Mammary epithelial cell (primary cell): ENCODE measurements at regions of chrX and their contacts with region 1.

Region 1: DNA sequence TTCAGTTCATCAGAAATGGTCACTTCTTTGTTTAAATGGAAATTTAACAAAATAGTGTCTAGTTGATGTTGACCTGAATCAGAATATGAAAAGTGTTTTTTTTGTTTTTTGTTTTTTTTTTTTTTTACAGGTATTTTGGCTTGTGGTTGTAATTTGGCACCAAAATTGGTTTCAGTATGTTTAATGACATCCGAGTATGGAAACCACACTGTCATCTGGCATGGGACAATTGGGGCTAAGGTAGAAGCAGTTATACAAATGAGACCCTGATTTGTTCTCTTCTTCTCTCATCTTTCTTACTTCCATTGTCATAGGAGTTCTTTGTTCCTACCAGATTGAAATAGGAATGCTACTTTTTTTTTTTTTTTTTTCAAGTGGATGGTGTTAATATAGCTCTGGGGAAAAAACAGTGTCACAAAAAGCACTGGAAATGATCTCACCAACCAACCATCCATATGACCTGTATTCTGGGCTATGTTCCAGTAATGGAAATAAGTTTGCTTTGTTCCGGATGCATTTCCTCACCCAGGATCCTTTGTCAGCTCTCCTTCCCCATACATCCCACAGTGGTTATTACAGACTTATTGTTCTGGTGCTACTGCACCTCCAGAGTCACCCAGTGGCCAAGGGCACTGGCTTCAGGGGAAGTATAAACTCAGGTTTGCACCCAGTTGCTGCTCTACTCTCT is 95.8 kb downstream of the ATXN3L start:
- DNase-seq: peak; percentile 96
- H3K4me3 ChIP-seq: no peak overlapping the region
- H3K27ac ChIP-seq: peak overlapping the region; percentile 44
- H3K4me1 ChIP-seq: peaks cover 34% of the 10 kb centered on the region
- H3K27me3 ChIP-seq: no peaks in the 10 kb centered on the region
- CTCF ChIP-seq: peak; percentile 22 to 35

Region 2: DNA sequence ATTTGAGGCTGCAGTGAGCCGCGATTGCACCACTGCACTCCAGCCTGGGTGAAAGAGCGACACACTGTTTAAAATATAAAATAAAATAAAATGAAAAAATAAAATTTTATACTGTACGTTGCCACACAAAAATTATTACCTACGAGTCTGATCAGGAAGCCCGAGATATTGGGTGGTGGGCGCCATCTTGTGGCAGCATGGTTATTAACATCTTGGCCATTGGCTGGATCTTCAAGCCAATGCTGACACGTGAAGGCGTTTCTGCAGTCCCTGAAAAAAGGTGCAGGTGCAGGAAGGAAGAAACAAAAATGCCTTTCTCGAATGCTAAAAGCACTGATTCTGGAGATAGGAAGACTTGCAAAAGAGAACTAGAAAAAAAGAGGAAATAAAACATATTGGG is 322.5 kb before region 1 on chrX:
- CTCF ChIA-PET with region 1: interaction called, 15 read pairs
- dilution Hi-C with region 1: no loop called
- in situ Hi-C with region 1: no loop called
- intact Hi-C with region 1: no loop called
- DNase-seq: peak; percentile 48
- H3K4me3 ChIP-seq: no peak overlapping the region
- H3K27ac ChIP-seq: no peak overlapping the region
- H3K4me1 ChIP-seq: no peaks in the 10 kb centered on the region
- H3K27me3 ChIP-seq: no peaks in the 10 kb centered on the region
- CTCF ChIP-seq: peak; percentile 79

Region 3: GRCh38 chrX:12984629-12985319 is 239.2 kb before region 1 on chrX:
- CTCF ChIA-PET with region 1: no interaction called
- dilution Hi-C with region 1: no loop called
- in situ Hi-C with region 1: no loop called
- intact Hi-C with region 1: loop called (anchors 1 kb)
- DNase-seq: peak; percentile 97
- H3K4me3 ChIP-seq: no peak overlapping the region
- H3K27ac ChIP-seq: peak overlapping the region; percentile 82
- H3K4me1 ChIP-seq: peaks cover 34% of the 10 kb centered on the region
- H3K27me3 ChIP-seq: no peaks in the 10 kb centered on the region
- CTCF ChIP-seq: no peak

Region 4: GRCh38 chrX:13101441-13102139 is 122.4 kb before region 1 on chrX:
- CTCF ChIA-PET with region 1: no interaction called
- dilution Hi-C with region 1: no loop called
- in situ Hi-C with region 1: no loop called
- intact Hi-C with region 1: loop called (anchors 2 kb)
- DNase-seq: peak; percentile 97
- H3K4me3 ChIP-seq: no peak overlapping the region
- H3K27ac ChIP-seq: peak overlapping the region; percentile 68
- H3K4me1 ChIP-seq: peaks cover 26% of the 10 kb centered on the region
- H3K27me3 ChIP-seq: no peaks in the 10 kb centered on the region
- CTCF ChIP-seq: no peak

Region 5: DNA sequence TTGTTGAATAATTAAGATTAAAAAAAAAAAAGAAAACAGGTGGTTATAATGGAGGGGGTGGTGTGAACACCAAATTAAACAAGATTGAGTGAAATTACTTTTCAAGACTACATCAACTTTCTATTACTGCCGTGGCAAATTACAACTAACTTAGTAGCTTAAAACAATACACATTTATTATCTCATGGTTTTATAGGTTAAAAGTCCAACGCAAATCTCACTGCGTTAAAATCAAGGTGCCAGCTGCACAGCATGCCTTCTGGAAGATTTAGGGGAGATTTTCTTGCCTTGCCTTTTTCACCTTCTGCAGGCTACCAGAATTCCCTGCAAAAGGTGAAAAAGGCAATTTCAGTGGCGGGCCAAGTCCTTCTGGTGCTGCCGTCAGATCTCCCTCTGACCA is 37.3 kb after region 1 on chrX:
- CTCF ChIA-PET with region 1: no interaction called
- dilution Hi-C with region 1: no loop called
- in situ Hi-C with region 1: no loop called
- intact Hi-C with region 1: no loop called
- DNase-seq: no peak
- H3K4me3 ChIP-seq: no peak overlapping the region
- H3K27ac ChIP-seq: no peak overlapping the region
- H3K4me1 ChIP-seq: peaks cover 1% of the 10 kb centered on the region
- H3K27me3 ChIP-seq: no peaks in the 10 kb centered on the region
- CTCF ChIP-seq: no peak

Region 6: DNA sequence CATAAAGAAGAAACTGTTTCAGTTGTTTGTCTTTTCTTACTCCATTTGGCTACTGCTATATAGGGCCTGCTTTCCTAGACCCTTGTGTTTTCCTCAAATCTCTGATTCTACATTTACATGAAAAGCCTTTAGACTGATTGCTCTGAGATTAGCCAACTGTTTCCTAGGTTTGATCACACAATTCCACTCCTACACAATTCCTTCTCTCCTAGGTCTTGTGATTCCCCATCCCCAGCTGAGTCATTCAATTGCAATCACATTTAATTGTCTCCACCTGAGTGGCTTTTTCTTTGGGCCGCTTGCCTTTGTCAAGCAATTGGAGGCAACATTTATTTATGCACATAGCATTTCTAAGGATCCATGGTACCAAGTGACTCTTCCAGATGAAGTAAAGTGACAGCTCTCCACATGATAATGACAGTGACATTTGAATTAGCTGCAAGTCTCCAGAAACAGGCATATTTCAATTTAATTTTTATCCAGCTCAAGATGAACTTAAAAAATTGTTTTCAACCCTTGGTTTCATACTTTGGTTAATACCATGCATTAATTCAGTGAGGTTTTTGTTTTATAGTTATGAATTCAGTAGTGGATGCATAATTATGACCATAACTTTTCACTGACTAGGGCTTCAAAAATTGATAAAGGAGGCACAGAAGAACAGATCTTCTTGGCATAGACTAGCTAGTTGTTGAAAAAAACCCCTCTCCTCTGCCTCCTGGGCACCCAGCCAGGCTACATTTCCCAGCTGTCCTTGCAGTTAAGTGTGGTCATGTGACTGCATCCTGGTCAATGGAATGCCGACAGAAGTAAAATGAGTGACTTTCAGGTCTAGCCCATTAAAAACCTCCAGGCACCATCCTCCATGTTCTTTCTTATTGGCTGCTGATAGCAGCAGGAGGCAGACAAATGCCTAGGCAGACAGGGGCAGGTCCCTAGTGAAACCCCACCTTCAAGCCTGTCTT is 60.2 kb after region 1 on chrX:
- CTCF ChIA-PET with region 1: no interaction called
- dilution Hi-C with region 1: no loop called
- in situ Hi-C with region 1: no loop called
- intact Hi-C with region 1: no loop called
- DNase-seq: peak; percentile 84
- H3K4me3 ChIP-seq: no peak overlapping the region
- H3K27ac ChIP-seq: peak overlapping the region; percentile 87
- H3K4me1 ChIP-seq: peaks cover 37% of the 10 kb centered on the region
- H3K27me3 ChIP-seq: no peaks in the 10 kb centered on the region
- CTCF ChIP-seq: no peak

Region 7: GRCh38 chrX:13398073-13398823 is 174.2 kb after region 1 on chrX:
- CTCF ChIA-PET with region 1: no interaction called
- dilution Hi-C with region 1: no loop called
- in situ Hi-C with region 1: no loop called
- intact Hi-C with region 1: loop called (anchors 1 kb)
- DNase-seq: peak; percentile 100
- H3K4me3 ChIP-seq: no peak overlapping the region
- H3K27ac ChIP-seq: peak overlapping the region; percentile 95
- H3K4me1 ChIP-seq: peaks cover 30% of the 10 kb centered on the region
- H3K27me3 ChIP-seq: no peaks in the 10 kb centered on the region
- CTCF ChIP-seq: no peak